MCF 10A (cell line): ENCODE measurements at regions of chr11 and their contacts with region 1.

Region 1: GRCh38 chr11:66638177-66639065 is at the start of gene RBM4:
- DNase-seq: peak; percentile 100
- H3K4me3 Mint-ChIP-seq: peak within 1 kb of the TSS; percentile 97
- H3K27ac Mint-ChIP-seq: peak within 1 kb of the TSS; percentile 98
- H3K4me1 Mint-ChIP-seq: peaks cover 44% of the 10 kb centered on the region
- H3K27me3 Mint-ChIP-seq: no peaks in the 10 kb centered on the region
- CTCF ChIP-seq: no peak
- total RNA-seq, gene RBM4: 171 and 172 TPM in 2 replicates

Region 2: GRCh38 chr11:66336234-66337102 is 302.0 kb before region 1 on chr11 and contains the start of gene RIN1:
- CTCF ChIA-PET with region 1: no interaction called
- POLR2A ChIA-PET with region 1: no interaction called
- intact Hi-C with region 1: no loop called
- DNase-seq: peak; percentile 96
- H3K4me3 Mint-ChIP-seq: peak within 1 kb of the TSS; percentile 89
- H3K27ac Mint-ChIP-seq: peak within 1 kb of the TSS; percentile 95
- H3K4me1 Mint-ChIP-seq: peaks cover 30% of the 10 kb centered on the region
- H3K27me3 Mint-ChIP-seq: no peaks in the 10 kb centered on the region
- CTCF ChIP-seq: no peak
- total RNA-seq, gene RIN1: 38.7 and 50.2 TPM in 2 replicates

Region 3: GRCh38 chr11:66510271-66510989 is 128.0 kb before region 1 on chr11 and contains the start of gene BBS1:
- CTCF ChIA-PET with region 1: no interaction called
- POLR2A ChIA-PET with region 1: interaction called, 6 read pairs
- intact Hi-C with region 1: loop called (anchors 1 kb)
- DNase-seq: peak; percentile 72
- H3K4me3 Mint-ChIP-seq: peak within 1 kb of the TSS; percentile 98
- H3K27ac Mint-ChIP-seq: peak within 1 kb of the TSS; percentile 88
- H3K4me1 Mint-ChIP-seq: peaks cover 11% of the 10 kb centered on the region
- H3K27me3 Mint-ChIP-seq: no peaks in the 10 kb centered on the region
- CTCF ChIP-seq: no peak
- total RNA-seq, gene BBS1: 31.7 and 33.9 TPM in 2 replicates

Region 4: DNA sequence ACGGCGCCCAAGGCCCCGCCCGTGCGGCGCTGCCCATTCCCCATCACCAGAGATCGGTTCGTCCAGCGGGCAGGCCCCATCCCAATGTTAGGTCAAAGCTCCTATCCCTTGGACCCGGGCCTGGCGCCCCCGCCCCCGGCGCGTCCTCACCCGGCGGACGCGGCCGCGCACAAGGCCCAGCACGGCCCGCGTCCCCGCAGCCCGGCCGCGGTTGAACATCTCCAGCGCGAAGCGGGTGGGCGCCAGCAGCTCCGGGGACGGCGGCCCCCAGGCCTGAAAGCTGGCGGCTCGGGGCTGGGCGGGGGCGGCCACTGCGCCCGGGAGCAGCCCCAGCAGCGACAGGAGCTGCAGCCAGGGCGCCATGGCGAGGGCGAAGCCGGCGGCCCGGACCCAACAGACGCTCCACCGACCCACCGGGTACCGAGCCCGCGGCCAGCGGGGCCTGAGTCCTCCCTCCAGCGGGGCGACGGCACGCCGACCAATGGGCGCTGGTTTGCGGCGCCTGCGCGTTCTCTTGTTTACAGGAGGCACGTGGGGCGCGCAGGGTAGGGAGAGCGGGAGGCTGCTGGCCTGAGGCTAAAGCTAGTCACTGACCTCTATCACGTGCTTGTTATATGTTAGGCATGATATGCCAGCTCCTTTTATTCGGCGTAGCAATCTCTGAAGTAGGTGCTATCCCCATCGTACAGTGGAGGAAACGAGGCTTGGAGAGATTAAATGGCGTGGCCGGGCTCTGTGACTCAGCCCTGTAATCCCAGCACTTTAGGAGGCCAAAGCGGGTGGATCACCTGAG is 70.1 kb before region 1 on chr11 and contains the start of gene CTSF:
- CTCF ChIA-PET with region 1: no interaction called
- POLR2A ChIA-PET with region 1: interaction called, 26 read pairs
- intact Hi-C with region 1: no loop called
- DNase-seq: peak; percentile 82
- H3K4me3 Mint-ChIP-seq: peak within 1 kb of the TSS; percentile 71
- H3K27ac Mint-ChIP-seq: peak within 1 kb of the TSS; percentile 77
- H3K4me1 Mint-ChIP-seq: peaks cover 7% of the 10 kb centered on the region
- H3K27me3 Mint-ChIP-seq: peaks cover under 1% of the 10 kb centered on the region
- CTCF ChIP-seq: no peak
- total RNA-seq, gene CTSF: 8.6 and 11.8 TPM in 2 replicates

Region 5: DNA sequence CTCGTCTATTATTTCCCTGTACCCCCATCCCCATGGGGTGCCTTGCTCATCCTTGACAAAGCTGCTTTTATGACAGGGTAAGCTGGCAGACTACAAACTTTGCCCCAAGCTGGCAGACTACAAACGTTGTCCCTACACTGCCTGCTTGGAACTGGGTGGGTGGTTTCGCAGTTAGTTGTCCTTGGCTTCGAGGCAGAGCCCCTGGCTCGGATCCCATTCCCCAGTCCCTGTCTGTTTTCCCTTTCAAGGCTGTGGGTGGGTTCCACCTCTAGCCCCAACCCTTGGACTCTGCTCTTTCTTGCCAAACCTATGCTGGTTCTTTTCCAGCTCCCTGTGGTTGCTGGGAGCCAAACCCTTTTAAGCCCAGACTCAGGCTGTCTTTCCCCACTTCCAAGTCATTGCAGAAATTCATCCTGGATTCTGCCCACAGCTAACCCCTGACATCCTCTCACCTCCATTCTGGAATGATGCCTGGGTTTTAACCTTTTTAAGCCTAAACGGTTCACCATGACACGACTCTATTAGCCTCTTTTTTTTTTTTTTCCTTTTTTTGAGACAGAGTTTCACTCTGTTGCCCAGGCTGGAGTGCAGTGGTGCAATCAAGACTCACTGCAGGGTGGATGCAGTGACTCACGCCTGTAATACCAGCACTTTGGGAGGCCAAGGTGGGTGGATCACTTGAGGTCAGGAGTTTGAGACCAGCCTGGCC is 31.1 kb before region 1 on chr11:
- CTCF ChIA-PET with region 1: interaction called, 3 read pairs
- POLR2A ChIA-PET with region 1: interaction called, 420 read pairs
- intact Hi-C with region 1: no loop called
- DNase-seq: peak; percentile 97
- H3K4me3 Mint-ChIP-seq: peak overlapping the region; percentile 48
- H3K27ac Mint-ChIP-seq: peak overlapping the region; percentile 90
- H3K4me1 Mint-ChIP-seq: peaks cover 18% of the 10 kb centered on the region
- H3K27me3 Mint-ChIP-seq: no peaks in the 10 kb centered on the region
- CTCF ChIP-seq: no peak

Region 6: GRCh38 chr11:66651016-66651415 is 12.6 kb after region 1 on chr11:
- CTCF ChIA-PET with region 1: interaction called, 3 read pairs
- POLR2A ChIA-PET with region 1: interaction called, 48 read pairs
- intact Hi-C with region 1: no loop called
- DNase-seq: no peak
- H3K4me3 Mint-ChIP-seq: no peak overlapping the region
- H3K27ac Mint-ChIP-seq: no peak overlapping the region
- H3K4me1 Mint-ChIP-seq: peaks cover 19% of the 10 kb centered on the region
- H3K27me3 Mint-ChIP-seq: no peaks in the 10 kb centered on the region
- CTCF ChIP-seq: no peak